ENCODE measurements at regions of chr4 and their contacts with region 1.

Region 1: DNA sequence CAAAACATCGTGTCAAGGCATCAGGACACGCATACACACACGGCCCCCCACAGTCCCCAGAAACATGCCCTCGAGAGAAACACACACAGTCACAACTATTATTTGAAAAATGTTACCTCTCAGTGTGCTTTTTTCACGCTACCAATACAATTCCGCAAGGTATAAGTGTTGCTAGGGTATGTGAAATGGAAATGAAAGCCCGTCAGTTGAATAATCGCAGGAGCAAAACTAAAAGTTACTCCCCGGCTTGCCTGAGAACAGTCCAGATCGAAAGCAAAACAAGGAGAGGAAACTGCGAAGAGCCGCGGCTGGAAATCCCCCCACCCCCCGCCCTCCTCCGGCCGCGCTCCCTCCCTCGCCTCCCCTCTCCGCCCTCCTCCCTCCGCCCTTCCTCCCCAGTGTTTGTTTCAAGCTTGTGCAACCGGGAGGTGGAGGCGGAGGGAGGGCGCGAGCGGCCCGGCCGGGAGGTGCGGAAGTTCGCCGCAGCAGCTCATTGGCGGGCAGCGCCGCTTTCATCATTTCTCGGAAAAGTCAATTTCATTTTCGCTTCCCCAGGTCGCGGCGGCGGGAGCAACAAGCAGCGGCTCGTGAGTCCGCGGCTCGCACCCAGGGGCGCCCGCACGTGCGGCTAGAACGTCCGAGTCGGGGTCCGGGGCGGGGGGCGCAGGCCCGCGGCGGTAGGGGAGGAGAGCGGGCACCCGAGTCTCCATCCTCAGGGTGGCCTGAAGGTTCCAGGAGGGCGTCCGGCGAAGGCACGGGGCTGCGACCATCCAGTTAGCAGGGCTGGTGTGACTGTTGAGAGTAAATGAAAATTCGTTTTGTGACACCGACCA is at the start of gene IRF2:
- DNase-seq: peak; percentile 93
- ATAC-seq: peak; percentile 60
- H3K4me3 ChIP-seq: peak within 1 kb of the TSS; percentile 94 to 99 (median 98)
- H3K27ac ChIP-seq: peak within 1 kb of the TSS; percentile 92
- H3K4me1 ChIP-seq: peaks cover 63% of the 10 kb centered on the region
- H3K27me3 ChIP-seq: no peaks in the 10 kb centered on the region; a peak in 1 of 5 replicates
- CTCF ChIP-seq: peak; percentile 27; the same call in 1 of the 2 replicates
- EP300 ChIP-seq: peak in 1 of 2 experiments; percentile 79; a peak in 2 of 4 replicates
- POLR2A ChIP-seq: peak in 1 of 2 experiments; percentile 66; a peak in 1 of 4 replicates
- RAD21 ChIP-seq: no peak
- total RNA-seq, gene IRF2: 15.5 and 24.8 TPM in 2 replicates

Region 2: DNA sequence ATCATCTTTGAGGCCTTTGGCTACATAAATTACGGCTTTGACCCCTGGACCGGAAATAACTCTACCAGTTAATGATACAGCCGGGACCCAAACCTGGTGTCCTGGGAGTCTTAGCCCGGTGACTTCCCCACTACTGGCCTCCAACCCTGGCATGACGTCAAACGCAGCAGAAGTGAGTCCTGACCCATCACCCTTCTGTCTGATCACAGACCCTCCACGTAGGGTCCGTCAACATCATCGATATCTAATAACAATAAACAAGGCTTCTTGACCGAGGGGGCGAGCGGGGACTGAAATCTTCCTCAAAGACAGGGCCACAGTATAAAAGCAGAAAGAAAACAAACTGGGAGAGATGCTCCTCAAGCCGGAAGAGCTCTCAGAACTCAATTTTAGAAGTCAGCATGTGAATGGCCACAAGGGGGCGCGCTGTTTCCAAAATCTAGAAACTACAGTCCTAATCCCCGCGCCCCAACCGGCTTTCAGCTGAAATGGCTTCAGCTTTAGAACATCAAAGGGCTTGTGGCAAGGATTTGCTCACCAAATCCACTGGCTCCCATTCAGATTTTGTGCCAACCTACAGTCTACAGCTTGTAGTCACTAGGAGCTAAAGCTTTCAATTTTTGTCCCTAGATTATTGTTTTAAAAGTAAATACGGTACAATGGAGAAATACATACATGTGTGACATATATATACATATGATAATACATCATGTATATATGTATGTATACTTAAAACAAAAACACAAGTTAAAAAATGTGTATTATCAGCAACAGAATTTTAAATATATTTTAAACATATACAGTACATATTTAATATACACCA is 210.4 kb before region 1 on chr4:
- CTCF ChIA-PET with region 1: no interaction called
- POLR2A ChIA-PET with region 1: interaction called, 11 read pairs
- in situ Hi-C with region 1: no loop called
- intact Hi-C with region 1: loop called (anchors 1 kb)
- DNase-seq: peak; percentile 87
- ATAC-seq: peak; percentile 84
- H3K4me3 ChIP-seq: no peak overlapping the region
- H3K27ac ChIP-seq: no peak overlapping the region
- H3K4me1 ChIP-seq: peaks cover 34% of the 10 kb centered on the region
- H3K27me3 ChIP-seq: no peaks in the 10 kb centered on the region
- CTCF ChIP-seq: peak; percentile 87
- EP300 ChIP-seq: no peak; a peak in 1 of 4 replicates
- POLR2A ChIP-seq: no peak
- RAD21 ChIP-seq: peak; percentile 87

Region 3: GRCh38 chr4:184335520-184335919 is 139.0 kb before region 1 on chr4:
- CTCF ChIA-PET with region 1: no interaction called
- POLR2A ChIA-PET with region 1: no interaction called
- in situ Hi-C with region 1: no loop called
- intact Hi-C with region 1: no loop called
- DNase-seq: no peak
- ATAC-seq: no peak
- H3K4me3 ChIP-seq: no peak overlapping the region
- H3K27ac ChIP-seq: no peak overlapping the region
- H3K4me1 ChIP-seq: peaks cover 35% of the 10 kb centered on the region
- H3K27me3 ChIP-seq: no peaks in the 10 kb centered on the region
- CTCF ChIP-seq: no peak
- EP300 ChIP-seq: no peak
- POLR2A ChIP-seq: no peak
- RAD21 ChIP-seq: no peak

Region 4: GRCh38 chr4:184347251-184348239 is 126.9 kb before region 1 on chr4:
- CTCF ChIA-PET with region 1: no interaction called
- POLR2A ChIA-PET with region 1: interaction called, 20 read pairs
- in situ Hi-C with region 1: no loop called
- intact Hi-C with region 1: loop called (anchors 5 kb)
- DNase-seq: no peak
- ATAC-seq: peak; percentile 1; the same call in 2 of the 3 replicates
- H3K4me3 ChIP-seq: peak overlapping the region; percentile 47 to 71 (median 62)
- H3K27ac ChIP-seq: peak overlapping the region; percentile 100
- H3K4me1 ChIP-seq: peaks cover 91% of the 10 kb centered on the region
- H3K27me3 ChIP-seq: no peaks in the 10 kb centered on the region
- CTCF ChIP-seq: no peak
- EP300 ChIP-seq: no peak
- POLR2A ChIP-seq: peak; percentile 25 to 37; a peak in 2 of 4 replicates
- RAD21 ChIP-seq: no peak

Region 5: GRCh38 chr4:184432127-184432922 is 42.2 kb before region 1 on chr4:
- CTCF ChIA-PET with region 1: no interaction called
- POLR2A ChIA-PET with region 1: no interaction called
- in situ Hi-C with region 1: loop called (anchors 5 kb)
- intact Hi-C with region 1: no loop called
- DNase-seq: no peak
- ATAC-seq: no peak
- H3K4me3 ChIP-seq: no peak overlapping the region
- H3K27ac ChIP-seq: no peak overlapping the region
- H3K4me1 ChIP-seq: peaks cover 34% of the 10 kb centered on the region
- H3K27me3 ChIP-seq: no peaks in the 10 kb centered on the region
- CTCF ChIP-seq: no peak
- EP300 ChIP-seq: no peak
- POLR2A ChIP-seq: no peak
- RAD21 ChIP-seq: no peak

Region 6: GRCh38 chr4:184460499-184461285 is 13.8 kb before region 1 on chr4:
- CTCF ChIA-PET with region 1: no interaction called
- POLR2A ChIA-PET with region 1: interaction called, 16 read pairs
- in situ Hi-C with region 1: no loop called
- intact Hi-C with region 1: no loop called
- DNase-seq: no peak
- ATAC-seq: no peak
- H3K4me3 ChIP-seq: no peak overlapping the region
- H3K27ac ChIP-seq: no peak overlapping the region
- H3K4me1 ChIP-seq: peaks cover 38% of the 10 kb centered on the region
- H3K27me3 ChIP-seq: no peaks in the 10 kb centered on the region
- CTCF ChIP-seq: no peak
- EP300 ChIP-seq: no peak
- POLR2A ChIP-seq: no peak
- RAD21 ChIP-seq: no peak

Region 7: GRCh38 chr4:184649026-184649970 is 174.8 kb after region 1 on chr4 and contains the starts of genes CASP3 and PRIMPOL:
- CTCF ChIA-PET with region 1: no interaction called
- POLR2A ChIA-PET with region 1: interaction called, 6 read pairs
- in situ Hi-C with region 1: no loop called
- intact Hi-C with region 1: loop called (anchors 10 kb)
- DNase-seq: peak; percentile 86
- ATAC-seq: peak; percentile 89
- H3K4me3 ChIP-seq: peak within 1 kb of the TSS; percentile 87 to 92 (median 88)
- H3K27ac ChIP-seq: peak within 1 kb of the TSS; percentile 88
- H3K4me1 ChIP-seq: peaks cover 56% of the 10 kb centered on the region
- H3K27me3 ChIP-seq: no peaks in the 10 kb centered on the region; a peak in 1 of 5 replicates
- CTCF ChIP-seq: peak; percentile 51
- EP300 ChIP-seq: no peak
- POLR2A ChIP-seq: peak; percentile 93 to 98
- RAD21 ChIP-seq: peak; percentile 41
- total RNA-seq, gene CASP3: 77.8 and 139 TPM in 2 replicates
- total RNA-seq, gene PRIMPOL: 11.0 and 17.3 TPM in 2 replicates

Measured in HepG2 (cell line).